Naive thymus-derived CD8-positive, alpha-beta T cell (primary cell): ENCODE measurements at regions of chr6 and their contacts with region 1.

Region 1: GRCh38 chr6:99520855-99521632 is 5.8 kb upstream of the USP45 start:
- DNase-seq: peak; percentile 24 to 80 (median 64)
- ATAC-seq: peak; percentile 91 to 94
- H3K4me3 Mint-ChIP-seq: peak overlapping the region; percentile 91 to 99 (median 97)
- H3K27ac Mint-ChIP-seq: peak overlapping the region; percentile 75 to 98 (median 93)
- H3K4me1 Mint-ChIP-seq: peaks cover 9 to 27% (median 21%) of the 10 kb centered on the region in 4 donors
- H3K27me3 Mint-ChIP-seq: peaks cover 0 to 2% (median 0%) of the 10 kb centered on the region in 5 donors

Region 2: DNA sequence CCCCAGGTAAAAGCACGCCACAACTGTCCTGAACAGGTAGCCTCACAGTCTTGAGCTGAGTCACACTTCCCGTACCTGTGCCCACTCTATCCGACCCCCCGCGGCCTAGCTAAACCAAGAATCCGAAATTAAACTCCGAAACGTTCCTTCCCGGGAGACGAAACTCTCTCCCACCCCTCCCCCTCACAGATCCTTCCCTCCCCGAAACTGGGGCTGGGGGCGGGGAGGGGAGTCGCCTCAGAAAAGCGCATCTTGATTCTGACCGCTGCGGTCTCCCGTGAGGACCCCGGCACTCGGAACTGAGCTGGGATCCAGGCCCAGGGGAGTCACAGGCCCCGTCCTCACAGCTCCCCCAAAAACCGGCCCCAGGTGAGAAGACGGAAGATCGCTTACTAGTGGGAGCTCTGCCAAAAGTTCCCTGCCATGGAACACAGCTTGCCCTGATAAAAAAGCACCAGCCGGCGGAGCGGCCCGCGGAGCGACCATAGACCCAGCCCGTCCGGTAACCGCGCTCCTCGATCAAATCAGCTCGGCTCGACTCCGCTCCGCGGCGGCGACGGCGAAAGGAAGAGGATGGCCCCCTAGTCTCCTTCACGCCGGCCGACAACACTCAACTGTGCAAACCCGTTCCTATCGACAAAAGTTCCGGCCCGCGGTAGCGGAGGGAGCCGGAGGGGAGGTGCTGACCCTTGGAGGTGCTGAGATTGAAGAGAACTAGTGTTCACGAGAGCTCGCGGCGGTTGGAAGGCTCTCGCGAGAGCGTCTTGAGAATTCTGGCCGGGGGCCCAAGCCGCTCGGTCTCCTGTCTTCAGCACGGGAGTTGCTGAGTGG is 47.3 kb after region 1 on chr6 and contains the start of gene CCNC:
- POLR2A ChIA-PET with region 1: interaction called, 11 read pairs
- DNase-seq: peak; percentile 71 to 92 (median 89)
- ATAC-seq: peak; percentile 92 to 94
- H3K4me3 Mint-ChIP-seq: peak within 1 kb of the TSS; percentile 94 to 100 (median 99)
- H3K27ac Mint-ChIP-seq: peak within 1 kb of the TSS; percentile 93 to 99 (median 96)
- H3K4me1 Mint-ChIP-seq: peaks cover 13 to 45% (median 31%) of the 10 kb centered on the region in 4 donors
- H3K27me3 Mint-ChIP-seq: no peaks in the 10 kb centered on the region
- polyA plus RNA-seq, gene CCNC: 37.8 to 44.3 (median 39.3) TPM